ENCODE measurements at regions of chr16 and their contacts with region 1.

Region 1: DNA sequence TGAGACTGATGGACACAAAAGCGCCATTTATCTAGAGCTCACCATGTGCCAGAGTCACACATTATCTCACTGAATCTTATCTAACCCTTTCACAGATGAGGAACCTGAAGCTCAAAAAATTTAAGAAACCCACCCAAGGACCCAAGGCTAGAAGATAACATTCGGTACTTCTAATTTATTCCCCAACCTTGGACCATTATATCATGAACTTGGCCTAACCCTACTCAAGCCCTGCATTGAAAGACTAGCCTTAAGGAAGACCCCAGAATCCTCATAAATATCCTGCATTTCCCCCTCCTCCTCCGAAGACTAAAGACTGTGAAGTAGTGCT is 548 bp upstream of the DYNC1LI2 start:
- DNase-seq: no peak
- H3K4me3 ChIP-seq: peak overlapping the region; percentile 86 to 100 (median 99)
- H3K27ac ChIP-seq: peak overlapping the region; percentile 94 to 97
- H3K4me1 ChIP-seq: peaks cover 0 to 12% of the 10 kb centered on the region in 2 donors
- H3K27me3 ChIP-seq: no peaks in the 10 kb centered on the region
- CTCF ChIP-seq: peak in 1 of 3 donors; percentile 50
- POLR2A ChIP-seq: no peak

Region 2: DNA sequence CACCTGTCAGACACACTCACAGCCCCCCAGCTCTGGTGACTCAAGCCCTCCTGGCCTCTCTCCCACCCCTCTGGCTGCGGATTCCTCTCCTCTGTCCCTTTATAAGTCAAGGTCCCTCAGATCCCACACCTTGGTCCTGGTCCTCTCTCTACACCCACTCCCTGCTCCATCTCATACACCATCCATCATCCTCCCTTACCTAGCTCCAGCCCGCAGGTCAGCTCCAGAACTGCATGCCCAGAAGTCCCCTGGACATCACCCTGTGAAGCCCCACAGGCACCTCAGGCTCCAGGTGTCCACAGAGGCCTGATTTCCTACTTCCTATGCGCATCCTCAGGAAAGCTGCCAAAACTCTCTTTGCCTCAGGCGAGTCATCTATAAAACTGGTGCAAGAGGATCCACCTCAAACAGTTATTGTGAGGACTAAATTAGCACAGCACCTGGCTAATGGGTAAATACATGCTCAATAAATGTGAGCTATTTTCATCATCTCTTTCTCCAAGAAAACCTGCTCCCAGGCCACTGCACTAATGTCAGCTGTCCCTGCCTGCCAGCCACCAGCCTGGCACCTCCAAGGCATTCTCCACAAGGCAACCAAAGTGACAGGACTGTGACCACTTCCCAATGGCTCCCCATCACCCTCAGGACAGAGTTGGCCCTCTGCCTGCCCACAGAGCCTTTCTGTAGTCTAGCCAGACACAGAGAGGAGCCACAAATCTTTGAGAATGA is 278.0 kb before region 1 on chr16:
- intact Hi-C with region 1: no loop called
- DNase-seq: no peak
- H3K4me3 ChIP-seq: no peak overlapping the region
- H3K27ac ChIP-seq: no peak overlapping the region
- H3K4me1 ChIP-seq: no peaks in the 10 kb centered on the region
- H3K27me3 ChIP-seq: no peaks in the 10 kb centered on the region
- CTCF ChIP-seq: no peak
- POLR2A ChIP-seq: no peak

Region 3: DNA sequence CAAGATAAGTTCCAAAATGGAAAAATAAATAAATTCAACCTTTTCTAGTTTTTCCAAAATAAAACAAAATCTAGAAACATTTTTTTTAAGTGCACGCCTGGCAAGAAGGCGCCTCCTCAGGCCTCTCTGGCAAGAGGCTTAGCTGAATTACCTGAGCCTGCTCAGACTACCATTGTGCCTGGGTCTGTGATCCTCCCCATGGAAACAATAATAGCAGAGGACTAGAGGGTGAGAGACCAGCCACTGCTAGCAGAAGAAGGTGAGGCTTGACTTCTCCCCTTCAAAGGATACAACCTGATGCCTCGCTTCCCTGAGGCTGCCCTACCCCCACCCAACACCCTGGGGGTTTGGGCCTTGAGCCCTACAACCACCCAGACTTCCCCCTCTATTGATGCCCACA is 34.6 kb after region 1 on chr16:
- intact Hi-C with region 1: no loop called
- DNase-seq: no peak
- H3K4me3 ChIP-seq: no peak overlapping the region
- H3K27ac ChIP-seq: no peak overlapping the region
- H3K4me1 ChIP-seq: no peaks in the 10 kb centered on the region
- H3K27me3 ChIP-seq: no peaks in the 10 kb centered on the region
- CTCF ChIP-seq: no peak
- POLR2A ChIP-seq: no peak

Region 4: GRCh38 chr16:66801320-66802105 is 49.6 kb after region 1 on chr16 and contains the start of gene TERB1:
- intact Hi-C with region 1: loop called (anchors 2 kb)
- DNase-seq: no peak
- H3K4me3 ChIP-seq: no peak within 1 kb of the TSS
- H3K27ac ChIP-seq: no peak within 1 kb of the TSS
- H3K4me1 ChIP-seq: no peaks in the 10 kb centered on the region
- H3K27me3 ChIP-seq: no peaks in the 10 kb centered on the region
- CTCF ChIP-seq: no peak
- POLR2A ChIP-seq: no peak
- total RNA-seq, gene TERB1: 0.33 to 0.64 (median 0.59) TPM